H1 (cell line): ENCODE measurements at regions of chr12 and their contacts with region 1.

Region 1: GRCh38 chr12:6620137-6620884 is 13.1 kb upstream of the CHD4 start:
- DNase-seq: peak; percentile 80 to 91
- H3K4me3 ChIP-seq: peak overlapping the region; percentile 11 to 52 (median 16); a peak in 6 of 8 replicates
- H3K27ac ChIP-seq: no peak overlapping the region
- H3K4me1 ChIP-seq: peaks cover 3 to 7% (median 6%) of the 10 kb centered on the region in 4 experiments; a peak in 6 of 7 replicates
- H3K27me3 ChIP-seq: peaks cover 4 to 27% (median 21%) of the 10 kb centered on the region in 4 experiments; a peak in 6 of 7 replicates
- CTCF ChIP-seq: peak; percentile 89 to 99 (median 92)
- EP300 ChIP-seq: 0 out of 3 replicates have a peak, but pooled peaks of 1 of the 2 experiments have one; percentile 40
- POLR2A ChIP-seq: peak in 1 of 2 experiments; percentile 68; a peak in 1 of 3 replicates
- RAD21 ChIP-seq: peak; percentile 53 to 67; a peak in 3 of 4 replicates

Region 2: GRCh38 chr12:6423267-6424007 is 196.9 kb before region 1 on chr12:
- CTCF ChIA-PET with region 1: no interaction called
- POLR2A ChIA-PET with region 1: no interaction called
- DNase-seq: peak; percentile 70 to 77
- H3K4me3 ChIP-seq: no peak overlapping the region
- H3K27ac ChIP-seq: no peak overlapping the region
- H3K4me1 ChIP-seq: peaks cover 0 to 4% (median under 1%) of the 10 kb centered on the region in 4 experiments; a peak in 2 of 7 replicates
- H3K27me3 ChIP-seq: no peaks in the 10 kb centered on the region; a peak in 1 of 7 replicates
- CTCF ChIP-seq: peak; percentile 84 to 96 (median 95)
- EP300 ChIP-seq: no peak
- POLR2A ChIP-seq: no peak
- RAD21 ChIP-seq: peak; percentile 97 to 99

Region 3: DNA sequence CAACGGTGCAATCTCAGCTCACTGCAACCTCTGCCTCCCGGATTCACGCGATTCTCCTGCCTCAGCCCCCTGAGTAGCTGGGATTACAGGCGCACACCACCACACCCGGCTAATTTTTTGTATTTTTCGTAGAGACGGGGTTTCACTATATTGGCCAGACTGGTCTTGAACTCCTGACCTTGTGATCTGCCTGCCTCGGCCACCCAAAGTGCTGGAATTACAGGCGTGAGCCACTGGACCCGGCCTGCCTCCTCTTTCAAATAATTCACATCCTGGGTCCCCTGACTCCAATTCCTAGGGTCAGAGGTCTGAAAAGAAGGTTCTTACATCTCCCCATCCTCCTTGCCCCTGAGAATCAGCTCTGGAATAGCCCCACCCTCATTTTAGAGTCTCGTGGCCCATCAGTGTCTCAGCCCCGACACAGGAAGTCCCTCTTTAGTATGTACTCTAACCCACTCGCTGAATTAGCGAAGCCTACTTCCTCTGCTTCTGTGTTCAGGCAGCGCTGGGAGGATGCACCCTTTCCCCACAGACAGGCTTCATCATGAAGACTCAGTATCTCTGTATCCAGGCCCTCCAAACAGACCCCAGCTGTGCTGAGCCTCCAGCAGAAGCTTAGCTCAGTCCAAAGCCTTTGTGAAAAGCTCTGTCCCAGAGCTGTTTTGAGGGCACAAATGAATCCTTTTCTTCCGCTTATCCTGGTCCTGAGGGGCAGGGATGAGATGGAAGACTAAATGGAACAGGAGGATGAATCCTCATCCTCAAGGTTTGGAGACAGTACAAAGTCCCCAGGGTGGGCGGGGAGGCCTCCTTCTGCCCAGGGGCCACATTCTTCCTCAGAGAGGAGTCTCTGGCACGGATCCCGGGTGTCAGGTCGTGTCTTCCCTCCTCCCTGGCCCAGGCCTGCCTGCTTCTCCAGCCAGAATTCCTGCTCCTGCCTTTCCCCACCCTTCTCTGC is 12.0 kb after region 1 on chr12:
- CTCF ChIA-PET with region 1: interaction called, 65 read pairs
- POLR2A ChIA-PET with region 1: interaction called, 18 read pairs
- DNase-seq: no peak
- H3K4me3 ChIP-seq: no peak overlapping the region
- H3K27ac ChIP-seq: no peak overlapping the region
- H3K4me1 ChIP-seq: peaks cover 0 to 11% (median 2%) of the 10 kb centered on the region in 4 experiments; a peak in 5 of 7 replicates
- H3K27me3 ChIP-seq: no peaks in the 10 kb centered on the region
- CTCF ChIP-seq: no peak
- EP300 ChIP-seq: no peak
- POLR2A ChIP-seq: no peak
- RAD21 ChIP-seq: no peak

Region 4: DNA sequence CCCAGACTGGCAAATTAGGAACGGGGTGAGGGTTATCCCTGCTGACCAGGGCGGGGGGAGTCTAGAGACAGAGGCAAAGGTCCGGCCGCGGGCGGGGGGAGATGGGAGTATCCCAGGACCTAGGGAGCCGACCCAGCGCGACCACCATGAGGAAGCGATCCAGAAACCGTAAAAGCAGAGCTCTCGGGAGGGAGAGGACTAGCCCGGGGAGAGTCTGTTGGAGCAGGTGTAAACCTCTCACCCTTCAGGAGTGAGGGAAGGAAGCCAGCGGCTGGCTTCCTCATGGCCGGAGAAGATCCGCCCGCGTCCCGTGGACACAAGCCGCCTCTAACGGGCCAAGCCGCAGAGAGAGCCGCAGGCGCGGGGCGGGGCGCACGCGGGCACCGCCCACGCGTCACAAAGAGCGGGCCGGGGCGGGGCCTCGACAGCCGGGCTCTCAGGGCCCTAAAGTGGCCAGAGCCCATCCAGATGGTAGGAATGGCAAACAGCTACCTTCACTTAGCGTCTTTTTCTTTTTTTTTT is 26.8 kb after region 1 on chr12 and contains the start of gene ACRBP:
- CTCF ChIA-PET with region 1: interaction called, 146 read pairs
- POLR2A ChIA-PET with region 1: interaction called, 18 read pairs
- DNase-seq: peak in 1 of 2 experiments; percentile 86
- H3K4me3 ChIP-seq: peak within 1 kb of the TSS; percentile 59 to 80 (median 68)
- H3K27ac ChIP-seq: no peak within 1 kb of the TSS
- H3K4me1 ChIP-seq: peaks cover 0 to 5% (median under 1%) of the 10 kb centered on the region in 4 experiments; a peak in 2 of 7 replicates
- H3K27me3 ChIP-seq: peaks cover 3 to 7% (median 6%) of the 10 kb centered on the region in 4 experiments; a peak in 4 of 7 replicates
- CTCF ChIP-seq: no peak
- EP300 ChIP-seq: no peak
- POLR2A ChIP-seq: no peak
- RAD21 ChIP-seq: no peak
- total RNA-seq, gene ACRBP: 0.80 and 1.2 TPM in 2 replicates

Region 5: DNA sequence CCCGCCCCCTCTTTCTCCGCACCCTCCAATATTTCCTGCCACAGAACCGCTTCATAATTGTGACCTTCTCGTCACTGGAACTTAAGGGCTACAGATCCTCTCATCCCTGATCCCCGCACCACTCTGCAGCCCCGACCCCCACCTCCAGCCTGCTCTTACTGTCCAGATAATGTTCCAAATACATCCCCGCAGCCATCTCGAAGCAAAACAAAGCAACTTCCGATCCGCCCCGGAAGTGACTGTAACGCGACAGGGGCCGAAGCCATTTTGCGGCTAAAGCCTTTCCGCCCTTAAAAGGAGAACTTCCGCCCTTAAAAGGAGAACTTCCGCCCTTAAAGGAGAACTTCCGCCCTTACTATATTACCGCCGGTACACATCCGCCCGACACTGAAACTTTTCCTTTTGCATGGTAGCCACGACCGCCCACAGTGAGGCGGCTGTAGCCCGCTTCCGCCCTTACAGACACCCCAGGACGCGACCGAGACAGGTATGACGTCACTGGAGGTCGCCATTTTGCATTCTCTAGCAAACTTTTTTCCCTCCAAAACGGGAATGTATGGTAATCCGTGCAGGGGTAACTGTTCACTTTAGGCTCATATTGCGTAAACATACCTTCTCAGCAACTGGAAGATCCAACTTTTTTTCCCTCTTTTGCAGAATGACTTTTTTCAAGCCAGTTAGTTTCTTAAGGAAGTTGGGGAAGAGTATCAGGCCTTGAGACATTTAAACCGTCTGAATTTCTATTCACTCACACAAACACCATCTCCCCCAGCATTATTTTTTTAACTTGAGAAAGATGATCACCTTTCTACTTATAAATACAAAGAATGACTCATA is 42.8 kb after region 1 on chr12 and contains the start of gene ING4:
- CTCF ChIA-PET with region 1: interaction called, 22 read pairs
- POLR2A ChIA-PET with region 1: interaction called, 10 read pairs
- DNase-seq: peak; percentile 88 to 95
- H3K4me3 ChIP-seq: peak within 1 kb of the TSS; percentile 72 to 90 (median 82)
- H3K27ac ChIP-seq: peak within 1 kb of the TSS; percentile 80
- H3K4me1 ChIP-seq: peaks cover 0 to 4% (median 0%) of the 10 kb centered on the region in 4 experiments; a peak in 1 of 7 replicates
- H3K27me3 ChIP-seq: no peaks in the 10 kb centered on the region
- CTCF ChIP-seq: no peak
- EP300 ChIP-seq: no peak
- POLR2A ChIP-seq: peak in 1 of 2 experiments; percentile 73; a peak in 2 of 3 replicates
- RAD21 ChIP-seq: no peak
- total RNA-seq, gene ING4: 21.7 and 22.9 TPM in 2 replicates

Region 6: GRCh38 chr12:6697584-6698351 is 77.5 kb after region 1 on chr12:
- CTCF ChIA-PET with region 1: interaction called, 10 read pairs
- POLR2A ChIA-PET with region 1: interaction called, 5 read pairs
- DNase-seq: peak in 1 of 2 experiments; percentile 60
- H3K4me3 ChIP-seq: peak overlapping the region in 1 of 4 experiments; percentile 7; a peak in 2 of 8 replicates
- H3K27ac ChIP-seq: no peak overlapping the region
- H3K4me1 ChIP-seq: peaks cover 0 to 7% (median 4%) of the 10 kb centered on the region in 4 experiments; a peak in 3 of 7 replicates
- H3K27me3 ChIP-seq: peaks cover 0 to 16% (median 14%) of the 10 kb centered on the region in 4 experiments; a peak in 6 of 7 replicates
- CTCF ChIP-seq: peak; percentile 65 to 85 (median 77)
- EP300 ChIP-seq: no peak
- POLR2A ChIP-seq: no peak
- RAD21 ChIP-seq: peak; percentile 80 to 87

Region 7: GRCh38 chr12:6792522-6793201 is 172.4 kb after region 1 on chr12:
- CTCF ChIA-PET with region 1: no interaction called
- POLR2A ChIA-PET with region 1: no interaction called
- DNase-seq: no peak
- H3K4me3 ChIP-seq: no peak overlapping the region
- H3K27ac ChIP-seq: no peak overlapping the region
- H3K4me1 ChIP-seq: peaks cover 0 to 9% (median under 1%) of the 10 kb centered on the region in 4 experiments; a peak in 3 of 7 replicates
- H3K27me3 ChIP-seq: 0 out of 7 replicates have a peak, but pooled peaks cover 0 to 3% (median 0%) of the 10 kb centered on the region in 4 experiments
- CTCF ChIP-seq: no peak
- EP300 ChIP-seq: no peak
- POLR2A ChIP-seq: no peak
- RAD21 ChIP-seq: no peak